ENCODE measurements at regions of chr16 and their contacts with region 1.

Region 1: GRCh38 chr16:23905027-23905426 is 69.2 kb downstream of the PRKCB start:
- DNase-seq: no peak
- ATAC-seq: no peak
- H3K4me3 ChIP-seq: no peak overlapping the region
- H3K4me3 Mint-ChIP-seq: no peak overlapping the region
- H3K27ac ChIP-seq: no peak overlapping the region
- H3K27ac Mint-ChIP-seq: peak overlapping the region; percentile 23
- H3K4me1 ChIP-seq: peaks cover 67 to 78% of the 10 kb centered on the region in 2 donors
- H3K4me1 Mint-ChIP-seq: peaks cover 93% of the 10 kb centered on the region
- H3K27me3 ChIP-seq: no peaks in the 10 kb centered on the region
- H3K27me3 Mint-ChIP-seq: no peaks in the 10 kb centered on the region
- CTCF ChIP-seq: no peak

Region 2: GRCh38 chr16:23858542-23858941 is 46.5 kb before region 1 on chr16:
- CTCF ChIA-PET with region 1: interaction called, 3 read pairs
- POLR2A ChIA-PET with region 1: interaction called, 3 read pairs
- intact Hi-C with region 1: loop called (anchors 10 kb)
- DNase-seq: no peak
- ATAC-seq: no peak
- H3K4me3 ChIP-seq: no peak overlapping the region
- H3K4me3 Mint-ChIP-seq: peak overlapping the region; percentile 54
- H3K27ac ChIP-seq: peak overlapping the region; percentile 26 to 86
- H3K27ac Mint-ChIP-seq: peak overlapping the region; percentile 80
- H3K4me1 ChIP-seq: peaks cover 96 to 97% of the 10 kb centered on the region in 2 donors
- H3K4me1 Mint-ChIP-seq: peaks cover 94% of the 10 kb centered on the region
- H3K27me3 ChIP-seq: no peaks in the 10 kb centered on the region
- H3K27me3 Mint-ChIP-seq: no peaks in the 10 kb centered on the region
- CTCF ChIP-seq: no peak

Region 3: GRCh38 chr16:23941963-23942564 is 37.0 kb after region 1 on chr16:
- CTCF ChIA-PET with region 1: interaction called, 4 read pairs
- POLR2A ChIA-PET with region 1: no interaction called
- intact Hi-C with region 1: loop called (anchors 2 kb)
- DNase-seq: no peak
- ATAC-seq: no peak
- H3K4me3 ChIP-seq: no peak overlapping the region
- H3K4me3 Mint-ChIP-seq: peak overlapping the region; percentile 41
- H3K27ac ChIP-seq: peak overlapping the region in 1 of 2 donors; percentile 73
- H3K27ac Mint-ChIP-seq: peak overlapping the region; percentile 91
- H3K4me1 ChIP-seq: peaks cover 64 to 68% of the 10 kb centered on the region in 2 donors
- H3K4me1 Mint-ChIP-seq: peaks cover 87% of the 10 kb centered on the region
- H3K27me3 ChIP-seq: no peaks in the 10 kb centered on the region
- H3K27me3 Mint-ChIP-seq: no peaks in the 10 kb centered on the region
- CTCF ChIP-seq: no peak

Region 4: GRCh38 chr16:24022797-24023196 is 117.8 kb after region 1 on chr16:
- CTCF ChIA-PET with region 1: no interaction called
- POLR2A ChIA-PET with region 1: no interaction called
- intact Hi-C with region 1: no loop called
- DNase-seq: no peak
- ATAC-seq: no peak
- H3K4me3 ChIP-seq: no peak overlapping the region
- H3K4me3 Mint-ChIP-seq: peak overlapping the region; percentile 21
- H3K27ac ChIP-seq: no peak overlapping the region
- H3K27ac Mint-ChIP-seq: peak overlapping the region; percentile 77
- H3K4me1 ChIP-seq: peaks cover 56 to 77% of the 10 kb centered on the region in 2 donors
- H3K4me1 Mint-ChIP-seq: peaks cover 81% of the 10 kb centered on the region
- H3K27me3 ChIP-seq: no peaks in the 10 kb centered on the region
- H3K27me3 Mint-ChIP-seq: no peaks in the 10 kb centered on the region
- CTCF ChIP-seq: no peak